Left cardiac atrium (tissue), 4 donors: ENCODE measurements at regions of chr15 and their contacts with region 1.

Region 1: DNA sequence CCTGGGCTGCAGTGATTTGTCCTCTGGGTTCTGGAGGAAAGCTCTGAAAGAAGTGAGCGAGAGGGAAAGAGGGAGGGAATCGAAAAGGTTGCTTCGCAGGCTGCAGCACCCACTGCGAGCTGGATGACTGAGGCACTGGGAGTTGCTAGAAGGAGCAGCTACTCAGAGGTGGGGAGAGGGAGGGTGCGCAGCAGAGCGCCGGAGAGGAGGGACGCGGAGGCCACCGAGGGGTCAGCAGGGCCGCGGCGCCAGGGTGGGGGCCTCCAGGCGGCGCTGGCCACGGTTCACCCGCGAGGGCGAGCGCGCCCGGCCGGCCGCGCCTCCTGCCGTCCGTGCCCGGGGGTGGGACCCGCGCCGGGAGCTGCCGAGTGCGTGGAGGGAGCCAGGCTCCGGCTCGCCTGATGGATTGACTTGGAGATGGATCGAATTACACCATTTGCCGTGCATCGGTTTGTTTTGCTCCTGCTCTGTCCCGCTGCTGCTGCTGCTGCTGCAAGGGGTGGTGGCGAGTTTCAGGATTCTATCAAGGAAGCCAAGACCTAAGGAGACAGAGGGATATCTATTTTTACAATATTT is at the start of gene SEMA6D:
- DNase-seq: peak; percentile 85
- ATAC-seq: peak; percentile 86 to 88
- total RNA-seq, gene SEMA6D: 5.1 to 12.5 TPM

Region 2: DNA sequence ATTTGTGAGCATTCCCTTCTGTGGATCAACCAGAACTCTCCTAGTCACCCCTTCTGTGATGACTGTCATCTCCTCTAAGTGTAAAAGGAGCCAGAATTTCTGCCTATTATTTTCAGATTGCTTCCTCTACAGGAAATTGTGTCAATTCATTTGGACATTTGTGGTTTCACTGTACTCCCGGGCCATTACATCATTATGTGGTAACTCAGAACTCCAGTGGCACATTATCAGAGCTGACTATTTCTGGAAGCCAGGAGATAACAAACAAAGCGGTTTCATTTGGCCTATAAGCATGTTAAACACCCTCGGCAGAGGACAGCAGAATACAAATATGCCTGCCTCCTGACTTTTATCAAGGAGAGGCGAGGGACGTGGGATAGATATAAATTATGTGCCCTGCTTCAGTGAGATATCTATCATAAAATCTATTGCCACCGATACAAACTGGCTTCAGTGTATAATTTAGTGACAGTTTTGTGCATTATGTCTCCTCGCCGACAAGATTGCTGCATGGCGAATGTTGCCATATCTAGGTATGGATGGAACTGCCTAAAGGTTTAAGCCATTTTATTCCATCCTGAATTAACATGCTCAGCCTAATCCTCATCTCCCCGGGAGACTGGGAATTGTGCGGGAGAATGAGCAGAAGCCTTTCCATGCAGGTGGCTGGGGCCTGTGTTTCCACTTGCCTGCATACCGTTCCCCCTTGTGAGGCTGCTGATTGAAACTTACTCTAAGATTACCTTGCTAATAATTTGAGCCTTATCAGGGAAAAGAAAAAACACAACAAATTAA is 193.2 kb before region 1 on chr15:
- intact Hi-C with region 1: loop called in 1 of 2 experiments (anchors 10 kb)
- DNase-seq: no peak
- ATAC-seq: peak; percentile 90 to 91

Region 3: GRCh38 chr15:47553947-47554346 is 163.2 kb before region 1 on chr15:
- intact Hi-C with region 1: no loop called
- DNase-seq: no peak
- ATAC-seq: no peak